Dendritic cell treated with granulocyte-macrophage colony-stimulating factor and Interleukin-4, amounts not matched to agents 40 ng/mL and 50 ng/mL, for 4 days (primary cell): ENCODE measurements at regions of chr3 and their contacts with region 1.

Region 1: GRCh38 chr3:133040696-133041523 is 2.7 kb downstream of the TMEM108 start:
- H3K4me3 Mint-ChIP-seq: no peak overlapping the region
- H3K27ac Mint-ChIP-seq: no peak overlapping the region
- H3K4me1 Mint-ChIP-seq: peaks cover 13% of the 10 kb centered on the region
- H3K27me3 Mint-ChIP-seq: peaks cover 52% of the 10 kb centered on the region

Region 2: GRCh38 chr3:132730891-132731580 is 309.9 kb before region 1 on chr3:
- intact Hi-C with region 1: loop called (anchors 10 kb)
- H3K4me3 Mint-ChIP-seq: no peak overlapping the region
- H3K27ac Mint-ChIP-seq: no peak overlapping the region
- H3K4me1 Mint-ChIP-seq: no peaks in the 10 kb centered on the region
- H3K27me3 Mint-ChIP-seq: peaks cover 14% of the 10 kb centered on the region

Region 3: DNA sequence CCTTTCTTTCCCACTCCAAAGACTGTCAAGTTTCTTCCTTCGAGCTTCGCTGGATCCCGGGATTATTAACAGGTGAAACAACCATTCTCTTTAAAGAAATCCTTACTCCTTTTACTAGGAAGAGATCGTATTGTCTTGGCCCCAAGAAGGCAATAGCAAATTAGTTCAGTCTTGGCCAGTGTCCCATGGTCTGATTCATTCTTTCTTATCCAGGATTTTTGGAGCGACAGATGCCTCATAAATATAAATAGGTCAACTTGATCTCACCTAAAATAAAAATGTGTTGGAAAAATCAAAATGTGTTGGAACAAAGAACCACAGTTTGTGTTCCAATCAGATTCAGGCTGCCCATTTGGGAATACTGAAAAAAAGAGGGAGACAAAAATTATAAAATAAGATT is 142.8 kb before region 1 on chr3:
- intact Hi-C with region 1: no loop called
- H3K4me3 Mint-ChIP-seq: no peak overlapping the region
- H3K27ac Mint-ChIP-seq: no peak overlapping the region
- H3K4me1 Mint-ChIP-seq: no peaks in the 10 kb centered on the region
- H3K27me3 Mint-ChIP-seq: no peaks in the 10 kb centered on the region

Region 4: DNA sequence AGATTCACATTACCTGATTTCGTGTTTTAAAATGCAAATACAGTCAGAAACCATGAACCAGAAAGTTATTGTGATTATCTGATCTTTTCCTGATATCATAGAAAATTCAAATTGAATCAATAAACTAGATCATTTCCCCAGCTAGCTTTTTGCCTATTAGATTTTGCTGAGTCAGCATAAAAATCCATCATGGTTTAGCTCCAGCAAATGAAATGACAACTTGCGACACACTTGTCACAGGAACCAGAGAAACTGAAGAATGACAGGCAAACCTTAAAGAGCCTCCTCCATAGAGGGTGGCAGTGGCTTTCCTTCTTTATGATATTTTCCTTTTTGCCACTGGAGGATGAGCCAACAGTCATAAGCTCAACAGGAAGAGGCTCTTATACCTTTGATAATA is 33.3 kb before region 1 on chr3:
- intact Hi-C with region 1: no loop called
- H3K4me3 Mint-ChIP-seq: no peak overlapping the region
- H3K27ac Mint-ChIP-seq: no peak overlapping the region
- H3K4me1 Mint-ChIP-seq: no peaks in the 10 kb centered on the region
- H3K27me3 Mint-ChIP-seq: no peaks in the 10 kb centered on the region

Region 5: DNA sequence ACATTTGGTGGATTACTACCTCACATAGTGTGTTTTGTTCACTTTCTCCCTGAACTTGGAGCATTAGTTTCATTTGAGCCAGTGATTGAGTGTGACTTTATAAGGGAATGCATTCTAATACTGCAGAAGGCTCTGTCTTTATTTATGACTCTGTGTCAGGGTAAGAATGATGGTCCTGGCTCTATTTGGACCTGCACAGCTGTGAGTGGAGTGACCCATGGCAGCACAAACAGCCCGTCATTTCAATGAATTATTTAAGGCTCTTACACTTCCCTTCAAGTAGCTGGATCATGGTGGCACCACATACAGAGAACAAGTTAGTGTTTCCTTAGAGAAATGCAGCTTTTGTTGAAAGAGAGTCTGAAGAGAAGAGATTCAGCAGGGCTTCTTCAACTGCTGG is 13.7 kb after region 1 on chr3:
- intact Hi-C with region 1: no loop called
- H3K4me3 Mint-ChIP-seq: no peak overlapping the region
- H3K27ac Mint-ChIP-seq: no peak overlapping the region
- H3K4me1 Mint-ChIP-seq: no peaks in the 10 kb centered on the region
- H3K27me3 Mint-ChIP-seq: peaks cover 3% of the 10 kb centered on the region

Region 6: DNA sequence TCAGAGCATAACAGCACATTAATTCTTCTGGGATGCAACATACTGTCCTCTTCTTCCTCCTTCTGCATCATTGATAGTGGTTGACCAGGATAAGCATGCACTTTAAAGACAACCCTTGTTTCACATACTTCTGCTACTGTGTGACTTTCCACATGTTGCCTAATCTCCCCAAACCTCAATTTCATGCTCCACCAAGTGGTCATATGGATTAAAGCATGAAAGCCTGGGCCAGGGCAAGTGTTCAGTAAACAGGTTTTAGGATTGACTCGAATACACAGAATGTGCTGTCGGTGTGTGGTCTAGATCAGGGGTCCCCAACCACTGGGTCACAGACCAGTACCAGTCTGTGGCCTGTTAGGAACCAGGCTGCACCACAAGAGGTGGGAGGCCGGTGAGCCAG is 336.5 kb after region 1 on chr3:
- intact Hi-C with region 1: loop called (anchors 5 kb)
- H3K4me3 Mint-ChIP-seq: no peak overlapping the region
- H3K27ac Mint-ChIP-seq: no peak overlapping the region
- H3K4me1 Mint-ChIP-seq: no peaks in the 10 kb centered on the region
- H3K27me3 Mint-ChIP-seq: no peaks in the 10 kb centered on the region

Region 7: GRCh38 chr3:133426721-133427120 is 385.8 kb after region 1 on chr3:
- intact Hi-C with region 1: loop called (anchors 1 kb)
- H3K4me3 Mint-ChIP-seq: no peak overlapping the region
- H3K27ac Mint-ChIP-seq: no peak overlapping the region
- H3K4me1 Mint-ChIP-seq: peaks cover 9% of the 10 kb centered on the region
- H3K27me3 Mint-ChIP-seq: peaks cover 14% of the 10 kb centered on the region